ENCODE measurements at regions of chr18 and their contacts with region 1.

Region 1: GRCh38 chr18:59358712-59359575 is at the start of gene LMAN1:
- DNase-seq: peak; percentile 91
- ATAC-seq: peak; percentile 96
- H3K4me3 ChIP-seq: peak within 1 kb of the TSS; percentile 72 to 93 (median 81)
- H3K4me3 Mint-ChIP-seq: peak within 1 kb of the TSS; percentile 96
- H3K27ac ChIP-seq: peak within 1 kb of the TSS; percentile 56 to 80
- H3K27ac Mint-ChIP-seq: peak within 1 kb of the TSS; percentile 90
- H3K4me1 ChIP-seq: peaks cover 16 to 21% of the 10 kb centered on the region in 2 donors
- H3K4me1 Mint-ChIP-seq: peaks cover 36% of the 10 kb centered on the region
- H3K27me3 ChIP-seq: no peaks in the 10 kb centered on the region
- H3K27me3 Mint-ChIP-seq: peaks cover 5% of the 10 kb centered on the region
- CTCF ChIP-seq: no peak
- total RNA-seq, gene LMAN1: 41.1 and 48.8 TPM in 2 replicates

Region 2: DNA sequence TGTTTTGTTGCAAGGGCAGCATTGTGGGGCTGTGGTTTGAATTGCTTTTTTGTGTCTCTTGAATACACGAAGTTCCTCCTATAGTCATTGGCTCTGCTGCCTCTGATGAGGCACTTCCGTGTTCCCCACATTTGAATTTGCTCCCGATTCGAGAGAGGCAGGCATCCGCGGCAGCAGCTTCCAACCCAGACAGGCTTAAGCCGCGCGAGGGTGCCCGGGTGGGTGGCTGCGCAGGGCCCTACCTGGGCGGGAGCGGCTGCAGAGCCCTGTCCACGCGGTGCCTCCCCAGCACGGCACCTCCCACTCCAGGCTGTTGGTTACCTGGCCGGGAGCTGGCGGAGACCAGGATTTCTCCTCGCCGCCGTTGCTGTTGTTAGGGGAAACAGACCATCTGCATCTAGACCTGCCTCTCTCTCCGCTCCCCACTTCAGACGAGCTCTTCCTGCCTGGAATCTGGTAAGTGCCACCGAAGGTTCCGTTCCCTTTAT is 1163.6 kb before region 1 on chr18:
- CTCF ChIA-PET with region 1: no interaction called
- POLR2A ChIA-PET with region 1: no interaction called
- intact Hi-C with region 1: no loop called
- DNase-seq: peak; percentile 47
- ATAC-seq: peak; percentile 63
- H3K4me3 ChIP-seq: peak overlapping the region; percentile 15 to 71 (median 54)
- H3K4me3 Mint-ChIP-seq: peak overlapping the region; percentile 94
- H3K27ac ChIP-seq: no peak overlapping the region
- H3K27ac Mint-ChIP-seq: peak overlapping the region; percentile 33
- H3K4me1 ChIP-seq: peaks cover 7 to 12% of the 10 kb centered on the region in 2 donors
- H3K4me1 Mint-ChIP-seq: peaks cover 25% of the 10 kb centered on the region
- H3K27me3 ChIP-seq: no peaks in the 10 kb centered on the region
- H3K27me3 Mint-ChIP-seq: no peaks in the 10 kb centered on the region
- CTCF ChIP-seq: no peak

Region 3: DNA sequence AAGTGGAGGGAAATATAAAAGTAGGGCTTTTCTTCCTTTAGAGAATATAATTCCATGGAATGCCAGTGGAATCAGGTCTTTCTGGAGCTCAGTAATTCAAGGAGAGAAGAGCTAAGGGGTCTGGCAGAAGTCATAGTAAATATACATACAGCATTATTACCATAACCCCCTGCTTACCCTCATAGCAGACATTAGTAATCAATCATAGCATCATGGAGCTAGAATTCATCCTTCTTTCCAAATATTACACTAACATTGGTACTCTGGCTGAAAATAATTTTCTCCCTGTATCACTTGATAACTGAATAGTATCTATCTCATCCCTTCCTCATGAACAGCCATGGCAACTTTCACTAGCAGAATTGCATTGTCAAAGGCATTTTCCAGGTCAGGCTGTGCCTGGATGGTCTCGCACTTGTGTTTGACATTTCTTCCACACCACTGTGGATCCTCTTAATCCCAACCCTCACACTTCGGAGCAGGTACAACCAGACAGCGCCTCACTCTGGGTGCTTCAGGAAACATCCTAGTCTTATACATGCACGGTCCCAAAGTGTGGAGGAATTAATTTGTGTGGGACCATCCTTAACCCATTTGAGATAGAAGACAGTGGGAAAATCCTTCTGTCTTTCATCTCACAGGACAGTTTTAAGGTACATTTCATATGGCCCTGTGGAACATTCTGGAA is 303.5 kb before region 1 on chr18:
- CTCF ChIA-PET with region 1: no interaction called
- POLR2A ChIA-PET with region 1: no interaction called
- intact Hi-C with region 1: no loop called
- DNase-seq: no peak
- ATAC-seq: no peak
- H3K4me3 ChIP-seq: no peak overlapping the region
- H3K4me3 Mint-ChIP-seq: no peak overlapping the region
- H3K27ac ChIP-seq: no peak overlapping the region
- H3K27ac Mint-ChIP-seq: no peak overlapping the region
- H3K4me1 ChIP-seq: peaks cover 18 to 22% of the 10 kb centered on the region in 2 donors
- H3K4me1 Mint-ChIP-seq: peaks cover 20% of the 10 kb centered on the region
- H3K27me3 ChIP-seq: no peaks in the 10 kb centered on the region
- H3K27me3 Mint-ChIP-seq: no peaks in the 10 kb centered on the region
- CTCF ChIP-seq: no peak

Region 4: DNA sequence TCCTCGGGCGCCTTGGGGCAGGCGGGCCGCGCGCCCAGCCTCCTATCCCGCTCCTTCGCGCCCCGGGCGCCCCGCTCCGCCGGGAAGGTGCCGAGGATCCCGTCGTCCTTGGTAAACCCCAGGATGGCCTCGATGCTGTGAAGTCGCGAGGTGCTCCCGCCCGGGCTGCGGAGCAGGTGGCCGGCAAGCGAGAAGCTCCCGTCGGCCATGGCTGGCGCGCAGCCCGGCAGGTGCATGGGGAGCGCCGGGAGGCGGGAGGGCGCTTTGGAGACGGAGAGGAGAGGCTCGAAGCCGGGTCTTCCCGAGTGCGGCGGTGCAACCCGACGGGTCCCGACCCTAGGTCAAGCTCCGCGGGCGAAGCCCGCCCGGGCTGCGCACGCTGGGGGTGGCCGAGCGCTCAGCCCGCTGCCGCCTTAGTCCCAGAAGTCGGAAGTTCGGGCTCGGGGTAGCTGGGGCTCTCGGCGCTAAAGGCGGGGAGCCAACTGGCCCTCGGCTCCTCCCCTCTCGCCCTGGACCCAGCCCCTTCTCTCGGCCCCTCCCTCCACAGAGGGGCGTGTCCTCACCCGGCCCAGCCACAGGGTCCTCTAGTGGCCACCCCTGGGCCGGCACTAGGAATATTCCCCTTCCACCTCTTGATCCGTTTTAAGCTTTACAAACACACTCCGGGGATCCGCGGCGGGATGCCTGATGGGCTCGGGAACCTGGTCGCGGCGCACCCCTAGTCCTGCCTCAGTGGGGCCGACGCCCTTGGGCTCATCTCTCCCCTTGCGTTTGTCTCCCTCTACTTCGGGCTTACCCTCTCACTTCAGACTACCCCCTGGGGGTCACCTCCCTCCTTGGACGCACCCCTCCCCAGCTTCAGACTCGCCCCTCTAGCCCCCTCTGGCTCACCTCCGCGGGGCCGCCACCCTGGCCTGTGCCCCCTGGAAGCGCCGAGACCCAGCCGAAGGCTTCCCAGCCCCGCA is 85.7 kb before region 1 on chr18 and contains the start of gene RAX:
- CTCF ChIA-PET with region 1: no interaction called
- POLR2A ChIA-PET with region 1: no interaction called
- intact Hi-C with region 1: loop called (anchors 5 kb)
- DNase-seq: peak; percentile 36
- ATAC-seq: peak; percentile 44
- H3K4me3 ChIP-seq: peak within 1 kb of the TSS in 3 of 5 experiments; percentile 17 to 43 (median 33)
- H3K4me3 Mint-ChIP-seq: peak within 1 kb of the TSS; percentile 47
- H3K27ac ChIP-seq: no peak within 1 kb of the TSS
- H3K27ac Mint-ChIP-seq: no peak within 1 kb of the TSS
- H3K4me1 ChIP-seq: peaks cover 33 to 44% of the 10 kb centered on the region in 2 donors
- H3K4me1 Mint-ChIP-seq: peaks cover 22% of the 10 kb centered on the region
- H3K27me3 ChIP-seq: peaks cover 0 to 88% (median 64%) of the 10 kb centered on the region in 4 experiments
- H3K27me3 Mint-ChIP-seq: peaks cover 74% of the 10 kb centered on the region
- CTCF ChIP-seq: no peak
- total RNA-seq, gene RAX: not detected in 2 replicates

Region 5: GRCh38 chr18:59308248-59308937 is 50.6 kb before region 1 on chr18:
- CTCF ChIA-PET with region 1: interaction called, 3 read pairs
- POLR2A ChIA-PET with region 1: no interaction called
- intact Hi-C with region 1: loop called (anchors 5 kb)
- DNase-seq: peak; percentile 72
- ATAC-seq: peak; percentile 86
- H3K4me3 ChIP-seq: peak overlapping the region in 3 of 5 experiments; percentile 23 to 57 (median 33)
- H3K4me3 Mint-ChIP-seq: peak overlapping the region; percentile 63
- H3K27ac ChIP-seq: no peak overlapping the region
- H3K27ac Mint-ChIP-seq: no peak overlapping the region
- H3K4me1 ChIP-seq: peaks cover 10 to 11% of the 10 kb centered on the region in 2 donors
- H3K4me1 Mint-ChIP-seq: no peaks in the 10 kb centered on the region
- H3K27me3 ChIP-seq: peaks cover 0 to 30% (median 15%) of the 10 kb centered on the region in 4 experiments
- H3K27me3 Mint-ChIP-seq: peaks cover 62% of the 10 kb centered on the region
- CTCF ChIP-seq: peak; percentile 78

Region 6: DNA sequence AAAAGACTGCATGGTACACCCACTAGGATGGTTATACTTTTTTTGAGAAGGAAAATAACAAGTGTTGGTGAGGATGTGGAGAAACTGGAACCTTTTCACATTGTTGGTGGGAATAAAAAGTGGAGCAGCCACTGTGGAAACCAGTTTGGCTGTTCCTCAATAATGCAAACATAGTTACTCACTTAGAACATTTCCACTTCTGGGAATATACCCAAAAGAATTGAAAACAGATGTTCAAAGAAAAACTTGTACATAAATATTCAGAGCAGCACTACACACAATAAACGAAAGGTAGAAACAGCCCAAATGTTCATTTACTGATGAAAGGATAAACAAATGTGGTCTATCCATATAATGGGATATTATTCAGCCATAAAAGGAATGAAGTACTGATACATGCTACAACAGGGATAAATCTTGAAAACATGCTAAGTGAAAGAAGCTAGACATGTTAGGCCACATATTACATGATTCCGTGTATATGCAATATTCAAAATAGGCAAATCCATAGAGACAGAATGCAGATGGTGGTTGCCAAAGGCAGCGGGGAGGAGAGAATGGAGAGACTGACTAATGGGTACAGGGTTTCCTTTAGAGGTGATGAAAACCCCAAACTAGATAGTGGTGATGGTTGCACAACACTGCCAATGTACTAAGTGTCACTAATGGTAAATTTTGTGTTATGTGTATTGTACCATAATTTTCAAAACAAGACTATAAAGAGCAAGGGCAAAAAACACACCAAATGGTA is 21.0 kb after region 1 on chr18:
- CTCF ChIA-PET with region 1: no interaction called
- POLR2A ChIA-PET with region 1: no interaction called
- intact Hi-C with region 1: loop called (anchors 1 kb)
- DNase-seq: no peak
- ATAC-seq: no peak
- H3K4me3 ChIP-seq: no peak overlapping the region
- H3K4me3 Mint-ChIP-seq: no peak overlapping the region
- H3K27ac ChIP-seq: no peak overlapping the region
- H3K27ac Mint-ChIP-seq: no peak overlapping the region
- H3K4me1 ChIP-seq: no peaks in the 10 kb centered on the region
- H3K4me1 Mint-ChIP-seq: peaks cover 5% of the 10 kb centered on the region
- H3K27me3 ChIP-seq: peaks cover 0 to 5% (median 0%) of the 10 kb centered on the region in 4 experiments
- H3K27me3 Mint-ChIP-seq: peaks cover 23% of the 10 kb centered on the region
- CTCF ChIP-seq: no peak

Measured in B cell (primary cell).